ENCODE measurements at regions of chr17 and their contacts with region 1.

Region 1: GRCh38 chr17:7818746-7819645 is 15.0 kb upstream of the KDM6B start:
- DNase-seq: no peak
- ATAC-seq: no peak
- H3K4me3 ChIP-seq: no peak overlapping the region
- H3K4me3 Mint-ChIP-seq: no peak overlapping the region
- H3K27ac ChIP-seq: no peak overlapping the region
- H3K27ac Mint-ChIP-seq: no peak overlapping the region
- H3K4me1 ChIP-seq: no peaks in the 10 kb centered on the region
- H3K4me1 Mint-ChIP-seq: no peaks in the 10 kb centered on the region
- H3K27me3 ChIP-seq: no peaks in the 10 kb centered on the region
- H3K27me3 Mint-ChIP-seq: no peaks in the 10 kb centered on the region
- CTCF ChIP-seq: no peak

Region 2: DNA sequence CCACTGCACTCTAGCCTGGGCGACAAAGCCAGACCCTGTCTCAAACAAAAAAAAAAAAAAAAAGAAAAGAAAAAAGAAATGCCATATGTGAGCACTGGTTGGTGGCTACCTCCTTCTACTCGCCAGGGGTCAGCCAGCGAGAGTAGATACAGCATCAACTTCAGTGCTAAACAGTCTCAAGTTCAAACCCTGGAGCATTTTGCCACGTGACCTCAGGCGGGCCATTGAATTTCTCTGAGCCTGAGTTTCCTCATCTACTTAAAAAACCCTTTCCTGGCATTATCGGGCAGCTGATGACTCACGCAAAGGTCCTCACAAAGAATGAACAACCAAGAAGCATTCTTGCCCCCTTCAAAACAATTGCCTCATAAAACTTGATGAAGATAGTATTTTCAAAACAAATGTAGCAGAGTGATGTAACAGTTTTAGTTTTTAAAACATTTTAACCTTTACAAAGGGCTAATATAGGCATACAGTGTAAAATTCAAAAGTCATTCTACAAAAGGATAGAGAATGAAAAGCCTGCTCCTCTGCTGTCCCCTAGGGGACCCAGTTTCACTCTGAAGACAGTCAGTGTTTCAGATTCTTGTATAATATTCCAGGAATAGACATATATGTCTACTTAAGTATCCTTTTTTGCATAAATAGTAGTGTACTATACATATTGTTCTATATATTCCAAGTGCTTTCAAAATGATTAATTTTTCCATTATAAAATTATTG is 73.1 kb before region 1 on chr17:
- CTCF ChIA-PET with region 1: interaction called, 4 read pairs
- POLR2A ChIA-PET with region 1: no interaction called
- intact Hi-C with region 1: loop called in 1 of 2 experiments (anchors 10 kb)
- DNase-seq: peak in 1 of 14 experiments; percentile 17
- ATAC-seq: no peak
- H3K4me3 ChIP-seq: no peak overlapping the region
- H3K4me3 Mint-ChIP-seq: no peak overlapping the region
- H3K27ac ChIP-seq: no peak overlapping the region
- H3K27ac Mint-ChIP-seq: no peak overlapping the region
- H3K4me1 ChIP-seq: no peaks in the 10 kb centered on the region
- H3K4me1 Mint-ChIP-seq: no peaks in the 10 kb centered on the region
- H3K27me3 ChIP-seq: peaks cover 2 to 4% of the 10 kb centered on the region in 2 experiments
- H3K27me3 Mint-ChIP-seq: peaks cover 17% of the 10 kb centered on the region
- CTCF ChIP-seq: no peak

Region 3: DNA sequence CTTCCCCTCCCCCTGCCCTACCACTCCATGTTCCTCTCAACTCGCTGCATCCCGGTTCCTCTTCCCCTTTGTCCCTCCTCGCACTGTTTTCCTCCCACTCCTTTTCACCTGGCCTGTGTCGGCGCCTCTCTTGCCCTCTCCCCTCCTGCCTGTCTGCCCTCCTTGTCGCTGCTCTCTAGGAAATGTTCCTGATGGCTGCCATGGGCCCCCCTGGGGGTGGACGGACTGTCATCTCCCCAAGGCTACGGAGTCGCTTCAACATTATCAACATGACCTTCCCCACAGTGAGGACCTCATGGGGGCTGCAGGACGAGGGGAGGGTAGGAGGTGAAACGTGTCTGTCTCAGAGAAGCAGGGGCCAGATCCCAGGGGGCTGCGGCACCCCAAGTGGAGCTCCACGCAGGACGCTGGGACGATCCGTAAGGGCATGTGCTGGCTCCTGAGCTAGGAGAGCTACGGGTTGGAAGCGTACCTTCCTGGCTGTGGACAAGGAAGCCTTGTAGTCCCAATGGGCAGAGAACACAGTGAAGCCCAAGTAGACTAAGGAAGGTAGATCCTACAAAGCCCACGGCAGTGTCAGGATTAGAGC is 24.8 kb before region 1 on chr17:
- CTCF ChIA-PET with region 1: no interaction called
- POLR2A ChIA-PET with region 1: no interaction called
- intact Hi-C with region 1: no loop called
- DNase-seq: no peak
- ATAC-seq: no peak
- H3K4me3 ChIP-seq: no peak overlapping the region
- H3K4me3 Mint-ChIP-seq: no peak overlapping the region
- H3K27ac ChIP-seq: no peak overlapping the region
- H3K27ac Mint-ChIP-seq: no peak overlapping the region
- H3K4me1 ChIP-seq: no peaks in the 10 kb centered on the region
- H3K4me1 Mint-ChIP-seq: no peaks in the 10 kb centered on the region
- H3K27me3 ChIP-seq: no peaks in the 10 kb centered on the region
- H3K27me3 Mint-ChIP-seq: no peaks in the 10 kb centered on the region
- CTCF ChIP-seq: no peak

Region 4: GRCh38 chr17:7851438-7852256 is 32.7 kb after region 1 on chr17:
- CTCF ChIA-PET with region 1: interaction called, 6 read pairs
- POLR2A ChIA-PET with region 1: no interaction called
- intact Hi-C with region 1: loop called (anchors 1 kb)
- DNase-seq: peak; percentile 93 to 99 (median 94)
- ATAC-seq: peak; percentile 82
- H3K4me3 ChIP-seq: peak overlapping the region; percentile 54
- H3K4me3 Mint-ChIP-seq: peak overlapping the region; percentile 84
- H3K27ac ChIP-seq: peak overlapping the region; percentile 57 to 59
- H3K27ac Mint-ChIP-seq: peak overlapping the region; percentile 95
- H3K4me1 ChIP-seq: peaks cover 38% of the 10 kb centered on the region
- H3K4me1 Mint-ChIP-seq: peaks cover 14% of the 10 kb centered on the region
- H3K27me3 ChIP-seq: no peaks in the 10 kb centered on the region
- H3K27me3 Mint-ChIP-seq: no peaks in the 10 kb centered on the region
- CTCF ChIP-seq: peak; percentile 97